ENCODE measurements at regions of chr7 and their contacts with region 1.

Region 1: DNA sequence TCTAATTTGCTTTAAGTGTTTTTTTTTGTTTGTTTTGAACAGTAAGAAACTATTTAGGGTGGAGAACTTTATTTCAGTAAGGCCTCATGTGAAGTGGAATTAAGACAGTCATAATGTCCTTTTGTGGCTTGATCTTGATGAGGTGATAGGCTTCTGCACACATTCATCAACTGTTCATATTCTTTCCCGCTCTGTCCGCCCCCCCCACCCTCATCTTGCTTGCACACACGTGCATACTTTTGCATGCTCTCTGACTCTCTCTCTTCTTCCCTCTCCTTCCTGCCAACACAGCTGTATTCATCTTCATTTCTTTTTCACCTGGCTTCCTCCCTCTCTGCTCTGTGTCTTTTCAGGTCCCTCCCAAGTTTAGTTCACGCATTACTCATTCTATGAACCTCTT is 429.6 kb downstream of the AUTS2 start:
- DNase-seq: no peak
- ATAC-seq: no peak
- H3K4me3 ChIP-seq: no peak overlapping the region
- H3K27ac ChIP-seq: no peak overlapping the region
- H3K4me1 ChIP-seq: peaks cover 0 to 19% (median 11%) of the 10 kb centered on the region in 9 donors
- H3K27me3 ChIP-seq: no peaks in the 10 kb centered on the region
- CTCF ChIP-seq: no peak

Region 2: GRCh38 chr7:69962186-69963065 is 65.4 kb before region 1 on chr7:
- intact Hi-C with region 1: loop called in 3 of 10 experiments (anchors 5 to 10 kb)
- DNase-seq: peak; percentile 64 to 71
- ATAC-seq: peak; percentile 47 to 91 (median 85)
- H3K4me3 ChIP-seq: peak overlapping the region in 2 of 10 donors; percentile 2 to 10
- H3K27ac ChIP-seq: peak overlapping the region in 7 of 10 donors; percentile 21 to 62 (median 36)
- H3K4me1 ChIP-seq: peaks cover 0 to 63% (median 42%) of the 10 kb centered on the region in 9 donors
- H3K27me3 ChIP-seq: no peaks in the 10 kb centered on the region
- CTCF ChIP-seq: no peak

Region 3: GRCh38 chr7:69982197-69982596 is 45.7 kb before region 1 on chr7:
- intact Hi-C with region 1: loop called in 1 of 10 experiments (anchors 5 kb)
- DNase-seq: no peak
- ATAC-seq: peak in 6 of 8 donors; percentile 48 to 86 (median 63)
- H3K4me3 ChIP-seq: no peak overlapping the region
- H3K27ac ChIP-seq: no peak overlapping the region
- H3K4me1 ChIP-seq: peaks cover 0 to 23% (median 12%) of the 10 kb centered on the region in 9 donors
- H3K27me3 ChIP-seq: no peaks in the 10 kb centered on the region
- CTCF ChIP-seq: no peak

Region 4: DNA sequence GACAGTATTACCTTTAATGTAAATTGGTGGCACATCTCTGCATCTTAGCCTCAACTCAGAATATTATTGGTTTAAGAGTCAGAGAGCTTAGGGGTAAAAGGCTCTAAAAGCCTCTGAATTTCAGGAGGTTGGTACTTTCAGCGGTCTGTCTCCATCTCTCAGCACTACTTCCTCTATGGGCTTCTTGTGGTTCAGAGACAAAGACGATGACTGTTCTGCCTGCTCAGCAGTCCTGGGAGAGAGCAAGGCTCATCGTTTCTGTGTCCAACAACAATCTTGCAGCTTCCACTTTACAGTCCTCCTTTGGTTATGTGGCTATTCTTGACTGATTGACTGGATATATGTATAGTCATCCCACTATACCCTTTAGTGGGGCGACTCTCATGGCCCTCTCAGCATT is 34.9 kb before region 1 on chr7:
- intact Hi-C with region 1: no loop called
- DNase-seq: no peak
- ATAC-seq: peak in 1 of 8 donors; percentile 44
- H3K4me3 ChIP-seq: no peak overlapping the region
- H3K27ac ChIP-seq: no peak overlapping the region
- H3K4me1 ChIP-seq: peaks cover 3 to 27% (median 13%) of the 10 kb centered on the region in 9 donors
- H3K27me3 ChIP-seq: no peaks in the 10 kb centered on the region
- CTCF ChIP-seq: no peak